ENCODE measurements at regions of chr18 and their contacts with region 1.

Region 1: DNA sequence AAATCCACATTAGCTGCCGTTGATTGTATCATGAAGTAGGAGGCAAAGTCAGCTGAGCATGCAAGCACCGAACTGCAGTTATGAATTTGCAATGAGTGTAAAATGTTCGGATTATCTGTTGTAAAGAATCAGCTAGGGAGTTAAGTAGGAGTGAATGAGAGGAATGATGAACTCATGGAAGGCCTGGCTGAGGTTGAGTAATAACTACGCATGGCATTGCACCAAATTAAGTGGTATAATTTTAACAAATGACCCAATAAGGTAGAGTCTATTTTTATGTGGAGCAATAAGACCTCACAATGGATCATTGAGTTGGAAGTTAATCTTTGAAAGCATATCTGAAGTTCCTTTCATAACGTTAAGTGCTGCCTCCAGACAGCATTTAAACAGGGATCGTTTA is 288.2 kb upstream of the CHST9 start:
- H3K4me3 Mint-ChIP-seq: no peak overlapping the region
- H3K27ac Mint-ChIP-seq: no peak overlapping the region
- H3K4me1 Mint-ChIP-seq: no peaks in the 10 kb centered on the region
- H3K27me3 Mint-ChIP-seq: no peaks in the 10 kb centered on the region

Region 2: DNA sequence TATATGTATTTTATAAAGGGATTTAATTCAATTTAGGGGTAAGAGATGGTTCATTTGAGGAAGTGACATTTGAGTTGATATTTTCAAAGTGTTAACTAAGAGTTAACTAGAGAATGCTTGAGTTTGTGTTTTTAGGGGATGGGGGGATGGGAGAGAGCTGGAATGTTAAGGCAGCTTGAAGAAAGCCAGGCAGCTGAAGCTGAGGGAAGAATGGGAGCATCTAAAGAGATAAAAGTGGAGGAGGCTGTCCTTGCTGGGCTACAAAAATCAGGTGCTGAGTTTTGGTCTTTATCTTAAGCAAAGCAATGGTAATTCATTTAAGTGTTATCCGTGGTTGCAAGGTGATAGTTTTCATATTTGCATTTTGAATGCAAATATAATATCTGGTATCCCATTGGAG is 297.4 kb before region 1 on chr18:
- intact Hi-C with region 1: no loop called
- H3K4me3 Mint-ChIP-seq: no peak overlapping the region
- H3K27ac Mint-ChIP-seq: no peak overlapping the region
- H3K4me1 Mint-ChIP-seq: no peaks in the 10 kb centered on the region
- H3K27me3 Mint-ChIP-seq: no peaks in the 10 kb centered on the region

Region 3: GRCh38 chr18:27540111-27540510 is 66.8 kb after region 1 on chr18:
- intact Hi-C with region 1: loop called (anchors 10 kb)
- H3K4me3 Mint-ChIP-seq: no peak overlapping the region
- H3K27ac Mint-ChIP-seq: no peak overlapping the region
- H3K4me1 Mint-ChIP-seq: no peaks in the 10 kb centered on the region
- H3K27me3 Mint-ChIP-seq: no peaks in the 10 kb centered on the region

Measured in dendritic cell treated with granulocyte-macrophage colony-stimulating factor and Interleukin-4, amounts not matched to agents 40 ng/mL and 50 ng/mL, for 4 days (primary cell).